Heart right ventricle (tissue), 16 donors: ENCODE measurements at regions of chr2 and their contacts with region 1.

Region 1: GRCh38 chr2:42928692-42929545 is 136.5 kb upstream of the HAAO start:
- DNase-seq: no peak
- ATAC-seq: peak in 3 of 8 donors; percentile 10 to 16 (median 13)
- H3K4me3 ChIP-seq: no peak overlapping the region
- H3K27ac ChIP-seq: peak overlapping the region; percentile 65 to 97 (median 90)
- H3K4me1 ChIP-seq: peaks cover 71 to 100% (median 96%) of the 10 kb centered on the region in 9 donors
- H3K27me3 ChIP-seq: no peaks in the 10 kb centered on the region
- CTCF ChIP-seq: peak in 7 of 9 donors; percentile 22 to 59 (median 40)

Region 2: GRCh38 chr2:42854207-42854818 is 74.6 kb before region 1 on chr2:
- intact Hi-C with region 1: no loop called
- DNase-seq: peak; percentile 63 to 65
- ATAC-seq: peak; percentile 54 to 87 (median 85)
- H3K4me3 ChIP-seq: no peak overlapping the region
- H3K27ac ChIP-seq: peak overlapping the region in 9 of 10 donors; percentile 44 to 80 (median 71)
- H3K4me1 ChIP-seq: peaks cover 2 to 23% (median 15%) of the 10 kb centered on the region in 9 donors
- H3K27me3 ChIP-seq: no peaks in the 10 kb centered on the region
- CTCF ChIP-seq: no peak

Region 3: DNA sequence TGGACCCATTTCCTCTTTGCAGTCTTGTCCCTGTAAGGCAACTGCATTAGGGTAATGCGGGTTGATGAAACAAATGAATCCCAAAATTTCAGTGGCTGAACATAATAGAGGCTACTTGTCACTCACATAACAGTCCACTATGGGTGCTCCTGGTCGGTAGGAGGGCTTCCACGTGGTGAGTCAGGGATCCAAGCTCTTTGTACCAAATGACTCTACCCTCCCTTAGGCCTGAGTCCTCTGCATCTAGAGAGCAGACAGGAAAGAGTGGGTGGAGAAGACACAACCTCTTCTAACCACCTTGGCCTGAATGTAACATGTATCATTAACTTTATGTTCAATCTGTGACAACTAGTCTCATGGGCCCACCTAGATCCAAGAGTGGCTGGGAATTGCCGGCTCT is 50.3 kb before region 1 on chr2:
- intact Hi-C with region 1: loop called in 6 of 10 experiments (anchors 1 to 10 kb)
- DNase-seq: no peak
- ATAC-seq: no peak
- H3K4me3 ChIP-seq: no peak overlapping the region
- H3K27ac ChIP-seq: peak overlapping the region; percentile 61 to 95 (median 82)
- H3K4me1 ChIP-seq: peaks cover 33 to 86% (median 71%) of the 10 kb centered on the region in 9 donors
- H3K27me3 ChIP-seq: no peaks in the 10 kb centered on the region
- CTCF ChIP-seq: no peak

Region 4: GRCh38 chr2:42964439-42965083 is 35.6 kb after region 1 on chr2:
- intact Hi-C with region 1: no loop called
- DNase-seq: peak; percentile 57 to 77
- ATAC-seq: peak in 5 of 8 donors; percentile 18 to 64 (median 36)
- H3K4me3 ChIP-seq: no peak overlapping the region
- H3K27ac ChIP-seq: peak overlapping the region in 9 of 10 donors; percentile 5 to 93 (median 59)
- H3K4me1 ChIP-seq: peaks cover 30 to 83% (median 70%) of the 10 kb centered on the region in 9 donors
- H3K27me3 ChIP-seq: no peaks in the 10 kb centered on the region
- CTCF ChIP-seq: no peak